Endothelial cell of umbilical vein (primary cell): ENCODE measurements at regions of chr5 and their contacts with region 1.

Region 1: GRCh38 chr5:96344678-96345577 is 88.1 kb downstream of the PCSK1 start:
- DNase-seq: peak; percentile 88
- H3K4me3 ChIP-seq: no peak overlapping the region
- H3K27ac ChIP-seq: no peak overlapping the region
- H3K4me1 ChIP-seq: peaks cover 25% of the 10 kb centered on the region
- H3K27me3 ChIP-seq: no peaks in the 10 kb centered on the region
- CTCF ChIP-seq: peak; percentile 42 to 47
- POLR2A ChIP-seq: no peak

Region 2: GRCh38 chr5:96198356-96199058 is 146.4 kb before region 1 on chr5:
- CTCF ChIA-PET with region 1: no interaction called
- POLR2A ChIA-PET with region 1: no interaction called
- dilution Hi-C with region 1: no loop called
- intact Hi-C with region 1: no loop called
- DNase-seq: peak; percentile 93
- H3K4me3 ChIP-seq: no peak overlapping the region
- H3K27ac ChIP-seq: peak overlapping the region; percentile 40
- H3K4me1 ChIP-seq: peaks cover 16% of the 10 kb centered on the region
- H3K27me3 ChIP-seq: no peaks in the 10 kb centered on the region
- CTCF ChIP-seq: no peak
- POLR2A ChIP-seq: no peak

Region 3: GRCh38 chr5:96439477-96440184 is 94.7 kb after region 1 on chr5:
- CTCF ChIA-PET with region 1: interaction called, 45 read pairs
- POLR2A ChIA-PET with region 1: no interaction called
- dilution Hi-C with region 1: no loop called
- intact Hi-C with region 1: loop called (anchors 2 kb)
- DNase-seq: peak; percentile 20
- H3K4me3 ChIP-seq: no peak overlapping the region
- H3K27ac ChIP-seq: no peak overlapping the region
- H3K4me1 ChIP-seq: no peaks in the 10 kb centered on the region
- H3K27me3 ChIP-seq: no peaks in the 10 kb centered on the region
- CTCF ChIP-seq: no peak
- POLR2A ChIP-seq: no peak

Region 4: DNA sequence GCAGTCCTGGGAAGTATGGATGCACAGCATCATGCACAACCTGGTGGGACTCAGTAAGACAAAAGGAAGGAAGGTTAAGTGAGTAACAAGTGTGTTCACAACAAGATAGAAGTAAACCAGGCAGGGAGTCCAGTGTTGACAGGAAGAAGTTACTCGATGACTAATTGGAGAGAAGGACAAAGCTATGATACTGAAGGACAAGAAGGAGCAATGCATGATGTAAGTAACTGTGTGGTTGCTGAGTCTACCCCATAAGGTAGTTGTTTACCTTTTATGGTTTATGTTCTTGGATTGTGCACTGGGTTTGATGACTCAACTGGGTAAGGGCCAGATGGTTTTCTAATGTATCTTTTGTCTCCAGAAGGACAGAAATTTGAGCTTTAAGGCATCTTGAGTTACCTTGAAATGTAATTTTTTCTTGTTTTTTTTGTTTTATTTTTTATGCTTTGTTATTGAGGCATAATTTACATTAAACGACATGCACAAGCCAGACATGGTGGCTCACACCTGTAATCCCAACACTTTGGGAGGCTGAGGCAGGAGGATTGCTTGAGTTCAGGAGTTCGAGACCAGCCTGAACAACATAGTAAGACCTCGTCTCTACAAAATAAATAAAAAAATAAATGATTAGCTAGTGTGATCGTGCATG is 228.1 kb after region 1 on chr5:
- CTCF ChIA-PET with region 1: interaction called, 10 read pairs
- POLR2A ChIA-PET with region 1: no interaction called
- dilution Hi-C with region 1: no loop called
- intact Hi-C with region 1: no loop called
- DNase-seq: peak; percentile 93
- H3K4me3 ChIP-seq: no peak overlapping the region
- H3K27ac ChIP-seq: peak overlapping the region; percentile 96
- H3K4me1 ChIP-seq: peaks cover 42% of the 10 kb centered on the region
- H3K27me3 ChIP-seq: no peaks in the 10 kb centered on the region
- CTCF ChIP-seq: no peak
- POLR2A ChIP-seq: peak; percentile 74

Region 5: GRCh38 chr5:96601811-96602244 is 256.9 kb after region 1 on chr5:
- CTCF ChIA-PET with region 1: interaction called, 158 read pairs
- POLR2A ChIA-PET with region 1: no interaction called
- dilution Hi-C with region 1: no loop called
- intact Hi-C with region 1: loop called (anchors 1 kb)
- DNase-seq: peak; percentile 87
- H3K4me3 ChIP-seq: peak overlapping the region in 1 of 3 experiments; percentile 21
- H3K27ac ChIP-seq: peak overlapping the region; percentile 90
- H3K4me1 ChIP-seq: peaks cover 43% of the 10 kb centered on the region
- H3K27me3 ChIP-seq: no peaks in the 10 kb centered on the region
- CTCF ChIP-seq: peak; percentile 71
- POLR2A ChIP-seq: no peak

Region 6: DNA sequence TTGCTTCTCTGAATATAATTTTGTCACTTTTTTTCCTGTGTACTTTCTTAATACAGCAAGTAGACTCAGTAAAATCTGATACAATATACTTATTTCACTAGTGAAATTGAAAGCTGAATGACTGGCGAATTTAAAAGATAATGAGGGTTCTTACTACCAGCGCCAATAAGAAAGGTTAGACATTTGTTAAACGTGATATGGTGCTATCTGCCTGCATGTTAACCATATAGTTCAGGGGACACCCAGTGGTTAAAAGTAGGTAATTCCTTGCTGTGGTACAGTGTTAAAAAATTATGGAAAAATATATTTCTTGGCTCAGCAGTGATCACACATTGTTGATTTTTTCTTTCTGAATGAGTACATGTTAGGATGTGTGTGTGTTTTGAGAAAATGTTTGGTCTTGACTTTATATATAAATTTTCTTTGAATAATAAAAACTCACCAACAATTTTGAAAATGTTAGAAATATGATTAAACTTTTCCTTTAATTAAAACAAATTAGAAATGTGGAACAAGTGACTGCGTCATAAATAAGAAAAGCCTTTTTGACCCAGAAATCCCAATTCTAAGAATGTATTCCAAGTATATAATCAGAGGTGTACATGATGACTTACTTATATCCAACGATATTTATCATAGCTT is 343.0 kb after region 1 on chr5:
- CTCF ChIA-PET with region 1: interaction called, 46 read pairs
- POLR2A ChIA-PET with region 1: no interaction called
- dilution Hi-C with region 1: no loop called
- intact Hi-C with region 1: loop called (anchors 1 kb)
- DNase-seq: peak; percentile 81
- H3K4me3 ChIP-seq: peak overlapping the region in 1 of 3 experiments; percentile 49
- H3K27ac ChIP-seq: peak overlapping the region; percentile 27
- H3K4me1 ChIP-seq: peaks cover 9% of the 10 kb centered on the region
- H3K27me3 ChIP-seq: no peaks in the 10 kb centered on the region
- CTCF ChIP-seq: peak; percentile 42 to 48
- POLR2A ChIP-seq: no peak

Region 7: GRCh38 chr5:96868603-96869371 is 523.9 kb after region 1 on chr5:
- CTCF ChIA-PET with region 1: interaction called, 11 read pairs
- POLR2A ChIA-PET with region 1: no interaction called
- dilution Hi-C with region 1: no loop called
- intact Hi-C with region 1: no loop called
- DNase-seq: peak; percentile 70
- H3K4me3 ChIP-seq: no peak overlapping the region
- H3K27ac ChIP-seq: no peak overlapping the region
- H3K4me1 ChIP-seq: no peaks in the 10 kb centered on the region
- H3K27me3 ChIP-seq: no peaks in the 10 kb centered on the region
- CTCF ChIP-seq: peak; percentile 80 to 88
- POLR2A ChIP-seq: no peak